Prostate gland (tissue), 2 donors: ENCODE measurements at regions of chr7 and their contacts with region 1.

Region 1: DNA sequence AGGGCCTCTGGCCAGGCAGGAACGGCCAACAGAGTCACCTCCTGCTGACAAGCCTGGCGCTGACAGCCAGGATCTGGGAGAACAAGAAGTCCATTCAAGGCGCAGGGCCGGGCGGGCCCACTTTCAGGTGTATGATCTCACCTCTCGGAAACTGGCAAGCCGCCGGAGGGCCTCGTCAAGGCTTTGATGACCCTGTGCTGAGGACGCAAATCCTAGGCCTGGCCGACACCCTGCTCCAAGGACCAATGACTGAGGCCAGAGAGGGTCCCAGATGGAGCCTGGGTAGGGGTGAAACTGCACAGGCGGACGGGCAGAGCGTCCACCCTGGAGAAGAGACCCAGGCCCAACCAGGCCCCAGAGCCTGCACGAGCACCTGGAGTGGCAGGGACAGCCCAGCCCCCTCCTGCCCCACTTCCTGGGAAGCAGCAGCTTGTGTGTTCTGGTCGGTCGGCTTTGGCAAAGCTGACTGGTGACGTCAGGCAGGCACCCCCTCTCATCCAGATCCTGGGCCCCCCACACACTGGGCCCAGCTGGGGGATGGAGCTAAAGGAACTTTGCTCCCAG is 30.6 kb downstream of the MYL10 start:
- DNase-seq: peak; percentile 80
- H3K4me3 ChIP-seq: no peak overlapping the region
- H3K27ac ChIP-seq: peak overlapping the region in 1 of 2 donors; percentile 22
- H3K4me1 ChIP-seq: peaks cover 2% of the 10 kb centered on the region
- H3K27me3 ChIP-seq: no peaks in the 10 kb centered on the region
- CTCF ChIP-seq: no peak
- POLR2A ChIP-seq: no peak

Region 2: DNA sequence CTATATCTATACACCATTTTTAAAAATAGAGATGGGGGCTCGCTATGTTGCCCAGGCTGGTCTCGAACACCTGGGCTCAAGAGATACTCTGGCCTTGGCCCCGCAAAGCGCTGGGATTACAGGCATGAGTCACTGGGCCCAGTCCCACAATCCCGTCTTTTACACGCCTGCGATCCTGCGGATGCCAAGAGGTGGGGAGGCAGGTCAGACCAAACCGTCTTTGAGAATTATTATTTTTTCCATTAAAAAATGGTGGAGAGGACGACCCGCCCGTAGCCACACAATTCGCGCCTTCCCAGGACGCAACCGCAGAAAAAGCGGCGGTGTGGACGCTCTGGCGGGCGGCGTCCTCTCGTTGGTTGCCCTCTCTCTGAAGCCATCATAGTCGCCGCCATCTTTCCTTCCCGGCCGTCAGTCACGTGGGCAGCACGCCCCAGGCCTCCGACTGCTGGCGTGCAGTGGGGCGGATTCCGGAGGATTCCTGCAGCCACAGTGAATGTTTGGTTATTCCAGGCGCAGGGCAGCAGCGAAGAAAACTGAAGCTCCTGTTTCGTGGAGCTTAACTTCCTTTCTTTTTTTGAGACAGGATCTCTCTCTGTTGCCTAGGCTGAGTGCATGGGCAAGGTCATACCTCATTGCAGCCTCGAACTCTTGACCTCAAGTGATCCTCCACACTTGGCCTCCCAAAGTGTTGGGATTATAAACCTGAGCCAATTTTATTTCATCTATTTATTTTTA is 761.2 kb before region 1 on chr7:
- intact Hi-C with region 1: no loop called
- DNase-seq: peak; percentile 86
- H3K4me3 ChIP-seq: peak overlapping the region; percentile 20 to 25
- H3K27ac ChIP-seq: peak overlapping the region; percentile 77 to 78
- H3K4me1 ChIP-seq: no peaks in the 10 kb centered on the region
- H3K27me3 ChIP-seq: no peaks in the 10 kb centered on the region
- CTCF ChIP-seq: peak in 1 of 4 experiments; percentile 16
- POLR2A ChIP-seq: peak; percentile 69

Region 3: GRCh38 chr7:102236592-102237287 is 638.2 kb after region 1 on chr7:
- intact Hi-C with region 1: loop called (anchors 10 kb)
- DNase-seq: peak; percentile 49
- H3K4me3 ChIP-seq: no peak overlapping the region
- H3K27ac ChIP-seq: no peak overlapping the region
- H3K4me1 ChIP-seq: no peaks in the 10 kb centered on the region
- H3K27me3 ChIP-seq: no peaks in the 10 kb centered on the region
- CTCF ChIP-seq: peak; percentile 53 to 82 (median 80)
- POLR2A ChIP-seq: no peak

Region 4: DNA sequence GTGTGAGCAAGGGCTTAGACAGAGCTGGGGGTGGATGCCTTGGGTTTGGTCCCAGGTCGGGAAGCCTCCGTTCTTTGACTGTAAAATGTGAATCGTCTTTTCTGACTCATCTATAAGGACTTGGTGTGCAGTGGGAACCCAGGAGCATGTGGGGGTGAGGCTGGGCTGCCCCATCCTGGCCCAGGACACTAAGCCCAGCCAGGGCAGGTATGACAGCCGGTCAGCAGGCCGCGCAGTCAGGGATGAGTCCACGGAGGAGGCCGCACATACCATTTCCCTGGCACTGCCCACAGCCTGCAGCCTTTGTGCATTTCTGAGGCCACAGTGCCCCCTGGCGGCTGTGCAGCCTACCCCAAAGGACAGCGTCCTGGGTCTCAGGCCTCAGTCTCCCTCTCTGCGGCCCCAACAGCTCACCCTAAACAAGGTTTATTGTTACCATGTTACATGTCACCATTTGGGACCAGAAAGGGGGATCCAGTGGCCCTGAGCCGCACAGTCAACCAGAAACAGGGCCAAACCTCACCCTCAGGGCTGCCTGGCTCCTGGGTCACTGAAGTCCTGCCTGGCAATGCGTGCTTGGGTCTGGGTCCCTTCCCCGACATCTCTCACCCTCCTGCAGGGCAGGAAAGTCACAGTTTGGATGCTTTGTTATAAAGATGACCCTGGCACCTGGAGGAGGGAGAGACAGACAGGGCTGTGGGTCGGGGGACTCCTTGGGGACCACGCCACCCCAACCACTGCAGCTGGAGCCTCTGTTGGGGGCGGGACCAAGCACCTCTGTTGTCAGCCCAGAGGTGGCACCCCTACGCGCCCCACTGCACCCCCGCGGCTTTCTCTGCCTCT is 673.8 kb after region 1 on chr7:
- intact Hi-C with region 1: loop called (anchors 2 kb)
- DNase-seq: peak; percentile 70
- H3K4me3 ChIP-seq: no peak overlapping the region
- H3K27ac ChIP-seq: no peak overlapping the region
- H3K4me1 ChIP-seq: no peaks in the 10 kb centered on the region
- H3K27me3 ChIP-seq: no peaks in the 10 kb centered on the region
- CTCF ChIP-seq: peak; percentile 81 to 95 (median 91)
- POLR2A ChIP-seq: no peak